BJ (cell line): ENCODE measurements at regions of chr22 and their contacts with region 1.

Region 1: GRCh38 chr22:29772170-29772641 is 5.0 kb downstream of the UQCR10 start:
- DNase-seq: no peak
- H3K4me3 ChIP-seq: no peak overlapping the region
- H3K27me3 ChIP-seq: no peaks in the 10 kb centered on the region
- CTCF ChIP-seq: peak; percentile 64

Region 2: GRCh38 chr22:29886596-29886995 is 114.4 kb after region 1 on chr22:
- CTCF ChIA-PET with region 1: no interaction called
- POLR2A ChIA-PET with region 1: interaction called, 29 read pairs
- DNase-seq: no peak
- H3K4me3 ChIP-seq: no peak overlapping the region
- H3K27me3 ChIP-seq: no peaks in the 10 kb centered on the region
- CTCF ChIP-seq: no peak

Region 3: GRCh38 chr22:29937940-29938693 is 165.9 kb after region 1 on chr22:
- CTCF ChIA-PET with region 1: no interaction called
- POLR2A ChIA-PET with region 1: no interaction called
- DNase-seq: no peak
- H3K4me3 ChIP-seq: no peak overlapping the region
- H3K27me3 ChIP-seq: no peaks in the 10 kb centered on the region
- CTCF ChIP-seq: no peak